CD4-positive, alpha-beta memory T cell (primary cell): ENCODE measurements at regions of chr15 and their contacts with region 1.

Region 1: DNA sequence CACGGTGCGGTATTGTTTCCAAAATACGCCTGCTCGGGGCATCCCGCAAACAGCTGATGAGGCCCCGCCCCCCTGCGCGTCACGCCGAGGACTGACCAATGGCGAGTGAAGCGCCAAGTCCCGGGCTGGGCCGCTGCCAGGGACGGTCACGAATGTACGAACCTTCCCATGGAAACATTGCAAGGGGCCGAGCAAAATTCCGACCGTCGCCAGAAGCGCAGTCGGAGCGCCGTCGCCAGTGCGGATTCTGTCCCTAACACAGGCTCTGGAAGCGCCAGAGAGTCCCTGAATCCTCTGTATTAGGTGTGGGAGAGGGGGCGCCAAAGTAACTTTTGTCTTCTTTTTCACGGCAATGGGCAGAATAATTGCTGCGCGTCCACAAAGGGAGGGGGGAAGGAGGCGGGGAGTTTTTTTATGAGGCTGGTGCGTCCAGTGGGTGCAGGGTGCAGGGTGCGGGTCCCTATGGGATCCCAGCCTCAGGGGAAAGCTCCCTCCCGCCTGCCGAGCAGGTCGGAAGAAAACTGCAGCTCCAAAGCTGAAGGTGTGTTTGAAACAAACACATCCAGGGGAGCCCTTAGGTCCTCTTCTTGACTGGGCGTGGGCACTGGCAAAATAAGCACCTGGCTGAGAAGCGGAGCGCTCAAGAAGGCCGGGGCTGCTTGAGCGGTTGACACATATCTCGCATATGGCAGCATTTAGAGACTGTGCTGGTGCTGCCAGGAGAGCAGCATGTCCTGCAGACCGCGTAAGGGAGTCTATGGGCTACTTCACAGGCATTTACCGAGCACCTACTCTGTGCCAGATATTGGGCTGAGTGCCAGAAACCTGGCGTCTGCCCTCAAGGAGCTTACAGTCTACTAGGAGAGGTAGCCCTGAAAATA is at the start of gene BMF:
- DNase-seq: peak; percentile 92 to 98 (median 93)
- H3K4me3 ChIP-seq: peak within 1 kb of the TSS; percentile 44 to 76
- H3K4me3 Mint-ChIP-seq: peak within 1 kb of the TSS; percentile 93 to 98 (median 96)
- H3K27ac ChIP-seq: peak within 1 kb of the TSS; percentile 56
- H3K27ac Mint-ChIP-seq: peak within 1 kb of the TSS; percentile 88 to 95 (median 92)
- H3K4me1 ChIP-seq: peaks cover 46% of the 10 kb centered on the region
- H3K4me1 Mint-ChIP-seq: peaks cover 17 to 49% (median 30%) of the 10 kb centered on the region in 4 donors
- H3K27me3 ChIP-seq: no peaks in the 10 kb centered on the region
- H3K27me3 Mint-ChIP-seq: peaks cover 2 to 4% of the 10 kb centered on the region in 2 donors
- total RNA-seq, gene BMF: 13.3 to 13.7 TPM

Region 2: DNA sequence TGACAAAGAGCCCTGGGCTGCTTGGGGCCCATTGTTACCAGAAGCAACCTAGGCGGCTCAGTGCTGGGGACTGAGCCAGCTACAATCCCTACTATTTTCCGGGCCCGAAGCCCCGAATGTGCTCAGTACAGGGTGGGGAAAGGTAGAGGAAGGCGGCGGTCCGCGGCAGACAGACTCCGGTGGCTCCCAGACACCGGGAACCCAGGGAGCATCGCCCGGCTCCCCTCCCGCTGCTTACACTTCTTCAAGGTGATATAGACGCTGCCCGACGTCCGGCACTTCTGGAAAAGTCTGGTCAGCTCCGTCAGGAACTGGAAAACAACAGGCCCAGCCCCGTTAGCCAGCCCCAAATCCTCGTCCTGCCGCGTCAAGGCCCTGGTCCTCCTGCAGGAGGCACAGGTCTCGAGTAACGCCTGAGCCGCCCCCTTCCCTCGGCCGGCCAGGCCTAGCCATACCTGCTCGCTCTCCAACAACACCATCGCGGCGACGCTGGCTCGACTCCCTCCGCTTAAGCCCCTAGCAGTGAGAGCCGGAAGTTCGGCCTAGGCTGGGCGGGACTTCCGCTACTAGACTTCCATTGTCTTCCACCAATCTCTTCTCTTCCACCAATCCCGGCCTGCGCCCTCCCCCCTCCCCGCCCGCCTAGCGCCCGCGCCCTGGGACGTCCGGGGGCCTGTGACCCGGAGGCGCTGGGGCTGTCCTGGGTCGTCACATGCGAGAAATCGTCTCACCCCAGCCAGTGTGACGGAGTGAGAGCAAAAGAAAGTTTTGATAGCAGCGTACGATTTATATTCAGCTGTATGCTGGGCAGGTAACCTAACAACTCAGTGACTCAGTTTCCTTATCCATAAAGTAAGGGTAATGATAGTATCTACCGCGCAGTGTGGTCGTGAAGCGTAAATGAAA is 70.2 kb before region 1 on chr15 and contains the start of gene SRP14:
- CTCF ChIA-PET with region 1: interaction called, 47 read pairs
- POLR2A ChIA-PET with region 1: interaction called, 28 read pairs
- intact Hi-C with region 1: loop called (anchors 2 kb)
- DNase-seq: peak; percentile 89 to 95 (median 90)
- H3K4me3 ChIP-seq: peak within 1 kb of the TSS; percentile 42 to 97
- H3K4me3 Mint-ChIP-seq: peak within 1 kb of the TSS; percentile 96 to 100 (median 99)
- H3K27ac ChIP-seq: peak within 1 kb of the TSS; percentile 98
- H3K27ac Mint-ChIP-seq: peak within 1 kb of the TSS; percentile 87 to 99 (median 98)
- H3K4me1 ChIP-seq: peaks cover 24% of the 10 kb centered on the region
- H3K4me1 Mint-ChIP-seq: peaks cover 22 to 49% (median 33%) of the 10 kb centered on the region in 4 donors
- H3K27me3 ChIP-seq: no peaks in the 10 kb centered on the region
- H3K27me3 Mint-ChIP-seq: no peaks in the 10 kb centered on the region
- total RNA-seq, gene SRP14: 118 to 120 TPM

Region 3: DNA sequence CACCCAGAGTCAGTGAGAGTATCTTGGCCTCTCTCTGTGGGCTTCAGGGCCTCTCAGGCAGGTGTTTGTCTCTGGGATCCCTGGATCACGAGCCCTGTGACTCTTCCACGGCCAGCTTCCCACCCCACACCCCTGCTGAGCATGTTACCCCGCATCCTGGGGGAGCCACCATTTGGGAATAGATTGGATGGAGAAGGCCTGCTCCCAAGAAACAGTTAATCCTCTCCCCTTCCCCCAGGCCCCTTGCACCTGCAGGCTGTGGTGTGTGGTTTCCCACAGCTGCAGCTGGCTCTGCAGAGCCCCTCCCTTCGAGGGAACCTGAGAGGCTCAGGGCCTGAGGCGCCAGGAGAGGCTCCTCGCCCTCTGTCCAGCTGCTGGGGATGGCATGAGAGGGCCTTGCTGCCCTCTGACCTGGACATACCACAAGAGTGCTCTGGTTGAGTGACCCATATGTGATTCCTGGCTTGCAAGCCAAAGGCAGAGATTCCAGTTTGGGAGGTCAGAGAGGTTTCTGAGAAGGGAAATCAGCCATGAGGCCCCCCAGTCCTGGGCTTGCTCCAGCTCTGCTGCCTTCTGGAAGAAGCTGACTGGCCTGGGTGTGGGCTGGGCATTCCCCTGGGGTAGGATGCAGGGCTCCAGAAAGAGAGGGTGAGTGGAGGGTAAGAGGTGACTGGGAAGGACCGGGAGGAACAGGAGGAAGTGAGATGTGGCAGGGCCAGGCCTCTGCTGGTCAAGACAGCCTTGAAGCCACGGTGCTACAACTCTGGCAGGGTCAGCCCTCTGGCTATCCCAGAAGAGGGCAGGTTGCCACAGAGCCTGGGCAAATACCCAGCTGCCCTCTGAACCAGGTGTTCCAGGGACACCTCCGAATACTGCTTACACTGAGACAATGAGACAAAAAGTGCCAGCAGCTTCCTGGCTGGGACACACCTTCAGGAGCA is 54.2 kb before region 1 on chr15:
- CTCF ChIA-PET with region 1: interaction called, 175 read pairs
- POLR2A ChIA-PET with region 1: interaction called, 63 read pairs
- intact Hi-C with region 1: no loop called
- DNase-seq: peak in 3 of 5 donors; percentile 15 to 35 (median 25)
- H3K4me3 ChIP-seq: no peak overlapping the region
- H3K4me3 Mint-ChIP-seq: peak overlapping the region; percentile 17 to 80 (median 70)
- H3K27ac ChIP-seq: no peak overlapping the region
- H3K27ac Mint-ChIP-seq: peak overlapping the region in 6 of 7 donors; percentile 65 to 89 (median 76)
- H3K4me1 ChIP-seq: peaks cover 41% of the 10 kb centered on the region
- H3K4me1 Mint-ChIP-seq: peaks cover 25 to 57% (median 38%) of the 10 kb centered on the region in 4 donors
- H3K27me3 ChIP-seq: no peaks in the 10 kb centered on the region
- H3K27me3 Mint-ChIP-seq: no peaks in the 10 kb centered on the region

Region 4: GRCh38 chr15:40098489-40099261 is 10.4 kb before region 1 on chr15:
- CTCF ChIA-PET with region 1: interaction called, 152 read pairs
- POLR2A ChIA-PET with region 1: interaction called, 30 read pairs
- intact Hi-C with region 1: no loop called
- DNase-seq: peak in 3 of 5 donors; percentile 20 to 66 (median 35)
- H3K4me3 ChIP-seq: no peak overlapping the region
- H3K4me3 Mint-ChIP-seq: peak overlapping the region in 7 of 8 donors; percentile 28 to 74 (median 59)
- H3K27ac ChIP-seq: no peak overlapping the region
- H3K27ac Mint-ChIP-seq: peak overlapping the region; percentile 77 to 92 (median 87)
- H3K4me1 ChIP-seq: peaks cover 51% of the 10 kb centered on the region
- H3K4me1 Mint-ChIP-seq: peaks cover 12 to 42% (median 28%) of the 10 kb centered on the region in 4 donors
- H3K27me3 ChIP-seq: no peaks in the 10 kb centered on the region
- H3K27me3 Mint-ChIP-seq: peaks cover 0 to 2% of the 10 kb centered on the region in 2 donors

Region 5: GRCh38 chr15:40183636-40184463 is 74.8 kb after region 1 on chr15:
- CTCF ChIA-PET with region 1: interaction called, 11 read pairs
- POLR2A ChIA-PET with region 1: no interaction called
- intact Hi-C with region 1: no loop called
- DNase-seq: no peak
- H3K4me3 ChIP-seq: no peak overlapping the region
- H3K4me3 Mint-ChIP-seq: peak overlapping the region in 5 of 8 donors; percentile 48 to 66 (median 59)
- H3K27ac ChIP-seq: no peak overlapping the region
- H3K27ac Mint-ChIP-seq: peak overlapping the region in 4 of 7 donors; percentile 24 to 90 (median 47)
- H3K4me1 ChIP-seq: peaks cover 37% of the 10 kb centered on the region
- H3K4me1 Mint-ChIP-seq: peaks cover 21 to 34% (median 29%) of the 10 kb centered on the region in 4 donors
- H3K27me3 ChIP-seq: no peaks in the 10 kb centered on the region
- H3K27me3 Mint-ChIP-seq: no peaks in the 10 kb centered on the region